Panc1 (cell line): ENCODE measurements at regions of chr20 and their contacts with region 1.

Region 1: DNA sequence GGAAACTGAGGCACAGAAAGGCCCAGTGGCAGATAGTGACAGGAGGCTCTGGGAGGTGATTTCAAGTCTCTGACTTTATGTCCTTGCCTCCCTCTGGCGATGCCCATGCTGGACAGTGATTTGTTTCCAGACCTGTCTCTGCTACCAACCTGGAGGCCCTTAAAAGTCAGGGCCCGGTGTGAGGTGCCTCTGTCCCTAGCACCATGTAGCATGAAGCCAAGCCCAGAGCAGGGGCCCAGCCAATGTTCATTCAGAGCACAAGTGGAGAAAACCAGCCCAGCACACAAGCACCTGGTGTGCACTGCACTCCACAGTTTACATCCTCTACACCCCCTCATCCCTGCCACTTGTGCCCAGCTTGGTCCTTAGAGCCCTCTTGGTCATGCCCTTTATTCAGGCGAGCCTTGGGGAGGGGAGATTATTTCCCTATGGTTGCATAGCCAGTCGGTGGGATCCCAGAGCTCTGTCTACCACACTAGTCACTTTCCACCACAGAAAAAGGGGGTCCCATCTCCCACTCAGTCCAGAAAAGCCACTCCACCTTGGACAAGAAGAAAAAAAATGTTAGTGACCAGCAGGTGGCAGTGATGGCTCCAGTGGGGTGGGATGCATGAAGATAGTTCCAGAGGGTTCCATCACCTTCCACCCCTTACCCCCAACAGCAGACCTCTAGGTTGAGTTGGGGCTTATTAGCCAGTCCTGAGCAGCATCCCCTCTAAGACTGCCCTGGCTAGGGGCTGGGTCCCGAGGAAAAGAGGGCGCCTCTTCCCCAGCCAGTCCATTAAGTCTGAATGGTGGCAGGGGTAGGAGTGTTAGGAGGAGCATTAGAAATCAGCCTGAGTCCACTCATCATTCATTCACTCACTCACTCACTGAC is 30.9 kb downstream of the KIAA1755 start:
- DNase-seq: no peak
- ATAC-seq: peak; percentile 61; the same call in 1 of the 2 replicates
- H3K4me3 ChIP-seq: no peak overlapping the region
- H3K27ac ChIP-seq: no peak overlapping the region
- H3K4me1 ChIP-seq: no peaks in the 10 kb centered on the region
- H3K27me3 ChIP-seq: no peaks in the 10 kb centered on the region
- CTCF ChIP-seq: peak; percentile 81

Region 2: DNA sequence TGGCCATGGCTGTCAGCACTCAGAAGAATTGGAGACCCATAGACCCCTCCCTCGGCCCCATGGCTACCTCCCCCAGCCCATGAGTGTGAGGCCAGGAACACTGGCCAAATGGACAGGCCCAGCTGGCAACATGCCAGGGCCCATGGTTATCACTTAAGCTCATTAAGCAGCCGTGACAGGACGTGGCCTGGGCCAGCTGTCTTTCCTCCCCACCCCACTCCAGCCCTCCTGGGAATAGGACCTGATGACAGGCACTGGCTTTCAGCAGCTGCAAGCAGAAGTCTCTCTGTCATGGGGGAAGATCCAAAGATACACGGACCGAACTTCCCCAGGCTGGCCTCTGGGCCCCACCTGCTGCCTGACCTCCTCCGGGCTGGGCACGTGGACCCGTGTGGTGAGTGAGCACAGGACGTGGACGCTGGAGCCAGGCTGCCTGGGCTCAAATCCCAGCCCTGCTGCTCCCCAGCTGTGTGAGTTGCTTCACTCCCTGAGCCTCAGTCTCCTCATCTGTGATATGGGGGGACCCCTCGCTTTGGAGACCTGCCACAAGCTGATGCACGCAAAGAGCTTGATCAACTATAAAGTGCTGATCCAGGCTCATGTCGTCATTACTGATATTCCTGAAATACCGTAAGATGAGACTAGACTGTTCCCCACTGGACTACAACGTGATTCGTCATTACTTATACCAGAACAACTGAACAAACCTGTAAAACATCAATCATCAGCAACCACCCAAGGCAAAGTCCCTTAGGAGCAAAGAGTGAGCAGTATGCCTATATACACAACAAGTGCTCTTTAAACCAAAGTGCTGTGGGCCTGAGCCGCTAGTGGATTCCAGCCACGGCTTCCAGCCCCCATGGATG is 348.7 kb before region 1 on chr20:
- CTCF ChIA-PET with region 1: no interaction called
- POLR2A ChIA-PET with region 1: no interaction called
- in situ Hi-C with region 1: no loop called
- intact Hi-C with region 1: no loop called
- DNase-seq: no peak
- ATAC-seq: no peak
- H3K4me3 ChIP-seq: no peak overlapping the region
- H3K27ac ChIP-seq: no peak overlapping the region
- H3K4me1 ChIP-seq: no peaks in the 10 kb centered on the region
- H3K27me3 ChIP-seq: no peaks in the 10 kb centered on the region
- CTCF ChIP-seq: no peak

Region 3: DNA sequence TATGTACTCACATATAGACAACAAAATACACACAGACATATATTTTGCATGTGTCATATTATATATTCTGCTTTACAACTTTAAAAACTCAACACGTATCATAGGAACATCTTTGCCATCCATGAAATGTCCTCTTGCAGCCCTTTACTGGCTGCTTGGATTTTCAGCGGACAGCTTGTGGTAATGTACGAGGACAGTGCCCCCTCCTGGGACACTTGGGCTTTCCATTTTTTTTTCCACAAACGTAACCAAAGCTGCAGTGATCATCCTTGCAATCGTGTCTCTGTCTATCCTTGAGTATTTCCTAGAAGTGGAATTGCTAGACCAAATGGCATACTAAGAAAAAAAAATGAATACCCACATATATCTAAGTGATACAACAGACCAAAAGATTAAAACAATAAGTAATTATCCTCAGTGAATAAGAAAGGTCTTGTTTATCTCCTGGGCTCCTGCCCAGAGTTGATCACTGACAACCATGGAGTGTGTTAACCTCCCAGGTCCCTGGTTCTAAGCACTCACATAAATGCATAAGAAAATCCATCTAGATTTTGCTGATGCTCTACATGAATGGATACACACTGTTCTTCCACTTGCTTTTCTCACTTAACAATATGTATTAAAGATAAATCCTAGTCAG is 92.5 kb after region 1 on chr20:
- CTCF ChIA-PET with region 1: interaction called, 3 read pairs
- POLR2A ChIA-PET with region 1: no interaction called
- in situ Hi-C with region 1: no loop called
- intact Hi-C with region 1: loop called (anchors 2 kb)
- DNase-seq: no peak
- ATAC-seq: peak; percentile 84
- H3K4me3 ChIP-seq: no peak overlapping the region
- H3K27ac ChIP-seq: no peak overlapping the region
- H3K4me1 ChIP-seq: no peaks in the 10 kb centered on the region
- H3K27me3 ChIP-seq: peaks cover 3% of the 10 kb centered on the region
- CTCF ChIP-seq: peak; percentile 87

Region 4: GRCh38 chr20:38406476-38406875 is 176.9 kb after region 1 on chr20:
- CTCF ChIA-PET with region 1: no interaction called
- POLR2A ChIA-PET with region 1: no interaction called
- in situ Hi-C with region 1: no loop called
- intact Hi-C with region 1: loop called (anchors 5 kb)
- DNase-seq: no peak
- ATAC-seq: no peak
- H3K4me3 ChIP-seq: no peak overlapping the region
- H3K27ac ChIP-seq: no peak overlapping the region
- H3K4me1 ChIP-seq: no peaks in the 10 kb centered on the region
- H3K27me3 ChIP-seq: no peaks in the 10 kb centered on the region
- CTCF ChIP-seq: no peak

Region 5: DNA sequence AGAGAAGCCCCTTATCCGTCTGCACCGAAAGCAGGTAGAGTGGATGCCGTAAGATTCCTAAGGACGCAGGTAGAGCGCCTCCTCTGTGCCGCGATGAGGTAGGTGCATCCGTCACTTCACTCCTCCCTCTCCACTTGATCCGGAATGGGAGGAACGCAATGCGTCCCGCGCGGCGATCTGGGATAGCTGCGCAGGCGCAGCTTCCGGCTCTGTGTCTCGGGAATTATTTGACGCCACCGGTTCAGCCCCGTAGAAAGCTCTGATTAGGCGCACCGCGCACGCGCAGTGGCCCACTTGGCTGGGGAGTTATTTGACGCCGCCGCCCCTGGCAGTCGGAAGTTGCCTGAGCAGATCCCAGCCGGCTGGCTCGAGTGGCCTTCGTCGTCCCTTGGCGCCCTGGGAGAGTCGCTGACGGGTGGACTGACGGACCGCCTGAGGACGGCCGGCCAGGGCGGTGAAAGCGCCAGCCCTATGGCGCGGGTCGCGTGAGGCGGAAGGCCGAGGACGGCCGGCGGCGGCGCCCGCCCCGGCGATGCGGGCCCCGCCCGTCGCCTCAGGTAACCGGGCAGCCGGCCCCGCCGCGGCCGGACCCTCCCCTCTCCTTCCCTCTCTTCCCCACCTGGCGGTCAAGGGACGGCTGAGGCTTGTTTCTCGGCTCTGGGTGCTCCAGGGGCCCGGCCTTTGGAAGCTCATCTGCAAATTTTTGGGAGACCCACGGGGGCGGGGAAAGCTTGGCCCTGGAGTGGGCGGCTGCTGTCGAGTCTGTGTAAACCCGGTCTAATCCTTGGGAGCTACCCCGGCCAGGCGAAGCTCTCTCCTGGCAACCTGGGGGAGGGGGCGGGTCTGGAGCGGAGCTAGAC is 243.1 kb after region 1 on chr20 and contains the start of gene RALGAPB:
- CTCF ChIA-PET with region 1: no interaction called
- POLR2A ChIA-PET with region 1: no interaction called
- in situ Hi-C with region 1: no loop called
- intact Hi-C with region 1: no loop called
- DNase-seq: peak; percentile 99
- ATAC-seq: peak; percentile 98
- H3K4me3 ChIP-seq: peak within 1 kb of the TSS; percentile 61 to 90
- H3K27ac ChIP-seq: peak within 1 kb of the TSS; percentile 89
- H3K4me1 ChIP-seq: peaks cover 26% of the 10 kb centered on the region
- H3K27me3 ChIP-seq: no peaks in the 10 kb centered on the region
- CTCF ChIP-seq: peak; percentile 68
- total RNA-seq, gene RALGAPB: 33.1 TPM